ENCODE measurements at regions of chr7 and their contacts with region 1.

Region 1: DNA sequence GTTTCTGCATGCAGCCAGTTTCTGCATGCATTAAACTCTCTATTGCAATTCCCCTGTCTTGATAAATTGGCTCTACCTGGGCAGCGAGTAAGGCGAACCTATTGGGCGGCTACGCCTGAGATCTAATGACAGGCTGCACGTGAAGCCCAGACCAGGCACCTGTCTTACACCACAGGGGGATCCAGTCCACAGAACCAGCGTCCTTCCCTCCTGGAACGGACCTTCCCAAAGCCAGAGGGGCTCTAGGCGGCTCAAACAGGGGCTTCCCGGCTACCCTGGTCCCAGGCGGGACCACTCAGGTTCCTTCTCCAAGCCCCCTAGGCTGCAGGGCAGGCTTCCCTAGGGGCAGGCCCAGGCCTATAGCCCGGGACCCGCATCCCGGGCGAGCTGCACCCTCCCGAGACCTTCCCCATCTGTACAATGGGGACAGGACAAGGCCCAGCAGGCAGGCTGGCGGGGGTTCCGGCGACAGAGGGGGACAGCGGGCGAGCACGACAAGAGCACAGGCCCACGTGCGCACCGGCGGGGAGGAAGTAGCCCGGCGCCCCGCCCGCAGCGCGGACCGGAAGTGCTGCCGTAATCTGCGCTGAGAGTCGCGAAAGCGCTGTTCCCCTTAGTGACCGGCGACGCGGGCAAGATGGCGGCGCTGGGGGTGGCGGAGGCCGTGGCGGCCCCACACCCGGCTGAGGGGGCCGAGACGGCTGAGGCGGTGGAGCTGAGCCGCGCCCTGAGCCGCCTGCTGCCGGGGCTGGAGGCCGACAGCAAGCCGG is at the start of gene DNAAF5:
- DNase-seq: peak; percentile 84
- H3K4me3 Mint-ChIP-seq: peak within 1 kb of the TSS; percentile 92
- H3K27ac Mint-ChIP-seq: peak within 1 kb of the TSS; percentile 96
- H3K4me1 Mint-ChIP-seq: peaks cover 23% of the 10 kb centered on the region
- H3K27me3 Mint-ChIP-seq: no peaks in the 10 kb centered on the region
- total RNA-seq, gene DNAAF5: 42.7 and 52.4 TPM in 2 replicates

Region 2: DNA sequence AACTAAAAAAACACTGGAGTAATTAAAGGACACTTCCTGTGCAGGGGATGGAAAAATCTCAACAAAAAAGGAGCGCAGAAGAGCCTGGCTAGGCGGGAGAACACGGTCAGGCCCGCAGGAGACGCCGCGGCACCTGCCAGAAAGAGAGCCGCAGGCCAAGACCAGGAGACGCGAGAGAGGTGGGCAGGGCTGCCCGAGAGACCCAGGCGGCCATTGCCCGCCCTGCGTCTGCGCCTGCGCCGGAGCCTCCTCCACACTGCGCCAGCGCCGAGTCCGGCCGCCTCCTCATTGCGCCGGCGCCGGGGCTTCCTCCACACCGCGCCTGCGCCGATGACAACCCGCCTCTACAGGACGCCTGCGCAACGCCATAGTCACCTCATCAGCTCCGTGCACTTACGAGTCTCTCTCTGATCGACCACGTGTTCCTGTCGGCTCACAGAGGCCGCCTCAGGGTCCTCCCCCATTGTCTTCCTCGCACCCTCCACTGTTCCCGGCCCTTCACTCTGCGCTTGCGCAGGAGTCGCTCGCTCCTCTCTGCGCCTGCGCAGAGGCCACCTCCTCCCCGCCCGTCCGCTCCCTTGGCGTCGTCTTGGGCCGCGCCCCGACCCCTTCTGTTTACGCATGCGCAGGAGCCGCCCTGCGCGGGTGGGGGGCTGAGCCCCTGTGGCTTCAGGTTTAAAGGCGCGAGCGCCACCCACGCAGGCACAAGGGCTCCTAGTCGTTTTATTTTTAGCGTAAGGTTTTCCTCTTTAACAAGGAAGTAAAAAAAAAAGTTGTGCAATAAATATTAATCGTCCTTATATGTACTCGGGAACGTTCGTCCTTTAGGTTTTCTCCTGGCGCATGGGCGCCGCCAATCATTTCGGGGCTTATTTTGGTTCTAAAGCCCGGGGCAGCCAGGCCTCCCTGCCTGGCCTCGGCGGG is 577.1 kb before region 1 on chr7:
- intact Hi-C with region 1: loop called (anchors 5 kb)
- DNase-seq: peak; percentile 98
- H3K4me3 Mint-ChIP-seq: peak overlapping the region; percentile 85
- H3K27ac Mint-ChIP-seq: peak overlapping the region; percentile 98
- H3K4me1 Mint-ChIP-seq: peaks cover 22% of the 10 kb centered on the region
- H3K27me3 Mint-ChIP-seq: peaks cover 5% of the 10 kb centered on the region

Region 3: DNA sequence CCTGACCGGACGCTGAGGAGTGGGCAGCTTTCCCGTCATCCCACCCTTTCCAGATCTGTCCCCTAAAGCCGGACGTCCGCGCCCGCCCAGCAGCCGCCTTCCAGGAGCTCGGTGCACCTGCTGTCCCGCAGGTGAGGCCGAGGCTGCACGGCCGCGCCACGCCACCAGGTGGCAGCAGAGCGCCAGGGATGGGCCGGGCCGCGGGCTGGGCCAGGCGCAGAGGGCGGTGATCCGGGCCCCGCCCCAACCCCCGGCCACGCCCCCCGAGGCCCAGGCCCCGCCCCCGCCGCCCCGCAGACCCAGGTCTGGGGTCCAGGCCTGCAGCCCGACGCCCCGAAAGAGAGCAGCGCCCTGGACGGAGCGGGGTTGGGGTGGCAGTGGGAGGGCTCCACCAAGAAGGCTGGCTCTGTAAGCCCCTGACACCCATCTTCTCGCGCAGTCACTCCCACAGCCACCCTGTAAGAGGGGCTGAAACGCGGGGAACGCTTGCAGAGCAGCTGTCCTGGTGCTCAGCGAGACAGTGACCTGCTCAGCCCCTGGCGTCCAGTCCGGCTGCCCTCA is 404.1 kb before region 1 on chr7:
- intact Hi-C with region 1: loop called (anchors 2 kb)
- DNase-seq: peak; percentile 78
- H3K4me3 Mint-ChIP-seq: no peak overlapping the region
- H3K27ac Mint-ChIP-seq: no peak overlapping the region
- H3K4me1 Mint-ChIP-seq: no peaks in the 10 kb centered on the region
- H3K27me3 Mint-ChIP-seq: peaks cover 7% of the 10 kb centered on the region

Region 4: DNA sequence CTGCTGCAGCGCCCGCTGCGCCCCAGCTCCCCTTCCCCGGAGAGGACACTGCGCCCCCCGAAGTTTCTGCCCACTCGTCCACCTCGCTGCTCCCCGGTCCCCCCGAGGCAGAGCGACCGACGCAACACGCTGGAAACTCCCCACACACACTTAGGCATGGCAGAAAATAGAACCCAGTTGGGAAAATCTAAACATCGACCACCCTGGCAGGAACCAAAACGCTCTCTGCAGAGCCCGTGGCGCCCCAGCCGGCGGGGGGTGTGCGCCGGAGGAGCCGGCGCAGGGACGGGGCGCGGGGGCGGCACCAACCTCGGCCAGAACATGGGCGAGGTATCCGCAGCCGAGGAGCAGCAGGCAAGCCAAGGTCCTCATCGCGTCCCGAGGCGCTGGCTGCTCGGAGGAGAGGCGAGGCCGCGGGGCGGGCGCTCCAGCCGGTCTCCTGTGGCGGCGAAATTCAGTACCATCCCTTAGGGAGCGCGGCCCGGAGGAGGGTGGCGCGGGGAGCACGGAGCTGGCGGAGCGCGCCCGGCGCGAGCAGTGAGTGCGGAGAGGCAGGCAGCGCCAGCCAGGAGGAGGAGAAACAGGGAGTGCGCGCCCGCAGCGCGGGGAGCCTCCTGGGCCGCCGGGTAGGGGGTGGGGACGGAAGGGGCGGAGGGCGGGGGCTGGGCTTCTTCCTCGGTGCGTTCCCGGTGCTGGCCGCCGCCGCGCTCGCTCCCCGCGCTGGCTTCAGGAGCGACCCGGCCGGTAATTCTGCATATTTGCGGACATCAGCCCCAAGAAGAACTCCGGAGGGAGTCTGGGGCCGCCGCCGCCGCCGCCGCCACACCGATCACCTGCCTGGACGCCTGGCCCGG is 207.4 kb before region 1 on chr7:
- intact Hi-C with region 1: loop called (anchors 2 kb)
- DNase-seq: peak; percentile 9
- H3K4me3 Mint-ChIP-seq: peak overlapping the region; percentile 86
- H3K27ac Mint-ChIP-seq: peak overlapping the region; percentile 76
- H3K4me1 Mint-ChIP-seq: peaks cover 3% of the 10 kb centered on the region
- H3K27me3 Mint-ChIP-seq: peaks cover 22% of the 10 kb centered on the region

Region 5: GRCh38 chr7:584122-584465 is 142.2 kb before region 1 on chr7:
- intact Hi-C with region 1: loop called (anchors 1 kb)
- DNase-seq: peak; percentile 83
- H3K4me3 Mint-ChIP-seq: peak overlapping the region; percentile 82
- H3K27ac Mint-ChIP-seq: peak overlapping the region; percentile 87
- H3K4me1 Mint-ChIP-seq: peaks cover 35% of the 10 kb centered on the region
- H3K27me3 Mint-ChIP-seq: peaks cover 2% of the 10 kb centered on the region

Region 6: DNA sequence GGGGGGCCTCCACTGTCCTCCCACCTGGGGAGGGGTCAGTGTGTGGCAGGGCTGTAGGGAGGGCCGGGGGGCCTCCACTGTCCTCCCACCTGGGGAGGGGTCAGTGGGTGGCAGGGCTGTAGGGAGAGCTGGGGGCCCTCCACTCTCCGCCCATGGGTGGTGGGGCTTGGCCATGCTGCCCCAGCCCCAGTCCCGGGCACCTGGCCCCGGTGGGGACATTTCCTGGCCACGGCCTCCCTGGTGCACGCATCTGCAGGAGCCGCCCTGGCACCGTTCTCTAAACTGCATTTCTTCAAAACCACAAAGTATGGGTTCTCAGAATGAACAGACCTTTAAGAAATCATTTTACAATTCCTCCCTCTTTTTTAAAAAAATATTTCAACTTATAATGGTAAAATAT is 117.3 kb before region 1 on chr7:
- intact Hi-C with region 1: no loop called
- DNase-seq: no peak
- H3K4me3 Mint-ChIP-seq: no peak overlapping the region
- H3K27ac Mint-ChIP-seq: no peak overlapping the region
- H3K4me1 Mint-ChIP-seq: peaks cover 38% of the 10 kb centered on the region
- H3K27me3 Mint-ChIP-seq: no peaks in the 10 kb centered on the region

Region 7: DNA sequence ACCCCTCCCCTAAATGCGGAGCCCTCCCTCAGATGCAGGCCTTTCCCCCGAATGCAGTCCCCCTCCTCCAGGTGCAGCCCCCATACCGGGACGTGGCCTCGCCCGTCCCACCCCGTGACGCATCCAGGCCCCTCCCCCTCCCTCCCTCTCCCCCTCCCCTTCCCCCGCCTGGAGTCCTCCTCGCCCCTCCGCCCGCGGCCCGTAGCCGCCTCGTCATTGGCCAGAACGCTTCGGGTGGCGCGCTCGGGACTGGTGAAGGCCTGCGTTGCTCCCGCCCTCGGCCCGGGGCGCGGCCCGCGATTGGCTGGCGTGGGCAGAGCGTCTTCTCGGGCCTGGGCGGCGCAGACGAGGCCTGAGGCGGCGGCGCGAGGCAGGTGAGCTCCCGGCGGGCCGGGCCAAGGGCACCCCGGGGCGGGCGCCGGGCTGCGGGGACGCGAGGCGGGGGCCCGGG is 90.1 kb after region 1 on chr7:
- intact Hi-C with region 1: loop called (anchors 2 kb)
- DNase-seq: peak; percentile 96
- H3K4me3 Mint-ChIP-seq: no peak overlapping the region
- H3K27ac Mint-ChIP-seq: no peak overlapping the region
- H3K4me1 Mint-ChIP-seq: peaks cover 55% of the 10 kb centered on the region
- H3K27me3 Mint-ChIP-seq: peaks cover 19% of the 10 kb centered on the region

Region 8: DNA sequence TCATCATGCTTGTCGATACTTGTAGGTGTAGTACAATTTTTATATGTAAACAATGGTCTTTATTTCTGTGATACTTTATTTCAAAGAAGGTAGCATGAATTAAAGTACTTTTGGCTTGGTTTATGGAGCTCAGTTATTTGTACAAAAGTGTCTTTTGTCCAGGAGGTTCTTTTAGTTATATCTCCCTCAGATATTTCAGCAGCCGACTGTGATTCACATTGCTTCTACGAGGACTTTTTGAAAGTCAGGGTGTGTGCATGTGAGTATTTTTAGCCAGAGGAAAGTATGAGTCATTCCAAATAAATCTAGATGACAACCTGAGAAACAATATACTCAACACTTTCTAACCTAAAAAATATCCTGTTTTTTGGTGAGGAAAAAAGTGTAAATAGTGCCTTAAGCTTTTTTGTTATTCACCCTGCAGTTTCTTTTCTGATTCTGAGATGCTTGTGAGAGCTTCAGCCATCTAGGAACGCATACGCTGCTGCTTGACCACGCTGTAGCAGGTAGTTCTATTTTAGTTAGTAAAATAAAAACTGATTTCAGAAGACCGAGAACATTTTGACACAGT is 105.4 kb after region 1 on chr7:
- intact Hi-C with region 1: loop called (anchors 5 kb)
- DNase-seq: no peak
- H3K4me3 Mint-ChIP-seq: peak overlapping the region; percentile 80
- H3K27ac Mint-ChIP-seq: peak overlapping the region; percentile 93
- H3K4me1 Mint-ChIP-seq: peaks cover 30% of the 10 kb centered on the region
- H3K27me3 Mint-ChIP-seq: no peaks in the 10 kb centered on the region

Measured in activated T-helper 1 cell treated with anti-CD3 and anti-CD28 coated beads, Interleukin-12 subunit alpha, Interleukin-12 subunit beta, Interleukin-2, Interleukin-4 antibody, amounts not matched to agents 30 ng/mL and 10 ng/mL and 1 ng/mL, durations not matched to agents 14 hours and 24 hours and 36 hours (primary cell).